ENCODE measurements at regions of chr17 and their contacts with region 1.

Region 1: DNA sequence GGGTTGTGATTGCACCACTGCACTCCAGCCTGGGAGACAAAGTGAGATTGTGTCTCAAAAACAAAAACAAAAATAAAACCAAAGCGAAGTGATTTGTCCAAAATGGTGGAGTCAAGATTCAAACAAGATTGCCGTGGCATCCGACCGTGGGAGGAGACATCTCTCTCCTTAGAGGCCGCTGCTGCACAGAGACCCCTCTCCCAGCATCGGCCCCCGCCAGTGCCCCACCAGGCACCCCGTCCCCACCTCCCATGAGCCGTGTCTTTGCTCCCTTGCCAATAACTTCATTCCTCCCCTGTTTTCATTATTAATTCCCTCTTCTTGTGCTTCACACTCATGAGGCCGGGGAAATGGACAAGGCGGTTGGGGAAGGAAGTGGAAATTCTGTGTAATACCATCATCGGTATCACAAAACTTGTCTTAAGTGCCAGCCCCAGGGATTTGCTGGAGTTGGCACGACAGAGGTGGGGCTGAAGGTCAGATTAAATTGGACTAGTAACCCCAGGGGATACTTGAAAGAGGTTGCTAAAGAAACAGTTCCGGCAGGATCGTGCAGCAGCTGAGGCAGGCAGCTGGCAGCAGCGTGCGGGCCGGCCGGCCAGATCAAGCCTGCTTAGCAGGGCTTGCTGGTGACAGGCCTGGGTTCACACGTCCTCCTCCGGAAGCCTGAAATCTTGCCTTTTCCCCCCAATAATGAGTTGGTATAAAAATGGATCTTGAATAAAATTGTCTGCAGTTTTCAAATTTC is 66.8 kb downstream of the RTN4RL1 start:
- DNase-seq: no peak
- ATAC-seq: no peak
- H3K4me3 ChIP-seq: no peak overlapping the region
- H3K4me3 Mint-ChIP-seq: no peak overlapping the region
- H3K27ac ChIP-seq: no peak overlapping the region
- H3K27ac Mint-ChIP-seq: no peak overlapping the region
- H3K4me1 ChIP-seq: no peaks in the 10 kb centered on the region
- H3K4me1 Mint-ChIP-seq: no peaks in the 10 kb centered on the region
- H3K27me3 ChIP-seq: peaks cover 0 to 8% of the 10 kb centered on the region in 2 experiments
- H3K27me3 Mint-ChIP-seq: no peaks in the 10 kb centered on the region

Region 2: GRCh38 chr17:596763-597644 is 1361.3 kb before region 1 on chr17:
- CTCF ChIA-PET with region 1: no interaction called
- POLR2A ChIA-PET with region 1: interaction called in 1 of 2 experiments, 14 read pairs
- DNase-seq: no peak
- ATAC-seq: no peak
- H3K4me3 ChIP-seq: no peak overlapping the region
- H3K4me3 Mint-ChIP-seq: no peak overlapping the region
- H3K27ac ChIP-seq: no peak overlapping the region
- H3K27ac Mint-ChIP-seq: no peak overlapping the region
- H3K4me1 ChIP-seq: no peaks in the 10 kb centered on the region
- H3K4me1 Mint-ChIP-seq: no peaks in the 10 kb centered on the region
- H3K27me3 ChIP-seq: no peaks in the 10 kb centered on the region
- H3K27me3 Mint-ChIP-seq: no peaks in the 10 kb centered on the region

Region 3: DNA sequence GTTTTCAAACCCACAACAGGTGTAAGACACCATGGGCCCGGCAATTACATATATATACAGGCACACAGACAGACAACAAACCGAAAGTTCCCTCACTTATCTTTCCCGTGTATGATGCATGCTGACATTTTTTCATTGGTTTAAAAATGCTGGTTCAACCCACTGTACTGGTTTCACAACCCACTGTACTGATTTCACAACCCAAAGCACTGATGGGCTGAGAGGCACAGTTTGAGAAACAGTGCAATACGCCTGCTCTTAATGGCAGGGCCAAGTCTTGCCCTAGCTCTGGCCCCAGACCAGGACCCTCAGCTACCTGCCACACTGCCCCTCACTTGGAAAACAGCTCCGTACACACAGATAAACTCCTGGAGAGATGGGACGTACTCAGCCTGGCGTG is 859.9 kb before region 1 on chr17:
- CTCF ChIA-PET with region 1: interaction called in 1 of 2 experiments, 11 read pairs
- POLR2A ChIA-PET with region 1: no interaction called
- DNase-seq: no peak
- ATAC-seq: peak in 1 of 4 experiments; percentile 25
- H3K4me3 ChIP-seq: no peak overlapping the region
- H3K4me3 Mint-ChIP-seq: peak overlapping the region in 1 of 3 donors; percentile 5
- H3K27ac ChIP-seq: no peak overlapping the region
- H3K27ac Mint-ChIP-seq: peak overlapping the region in 1 of 2 donors; percentile 9
- H3K4me1 ChIP-seq: peaks cover 4 to 27% of the 10 kb centered on the region in 2 experiments
- H3K4me1 Mint-ChIP-seq: peaks cover 12 to 45% (median 37%) of the 10 kb centered on the region in 3 donors
- H3K27me3 ChIP-seq: no peaks in the 10 kb centered on the region
- H3K27me3 Mint-ChIP-seq: no peaks in the 10 kb centered on the region

Region 4: GRCh38 chr17:2011411-2012371 is 53.4 kb after region 1 on chr17:
- CTCF ChIA-PET with region 1: no interaction called
- POLR2A ChIA-PET with region 1: no interaction called
- DNase-seq: no peak
- ATAC-seq: no peak
- H3K4me3 ChIP-seq: no peak overlapping the region
- H3K4me3 Mint-ChIP-seq: no peak overlapping the region
- H3K27ac ChIP-seq: no peak overlapping the region
- H3K27ac Mint-ChIP-seq: no peak overlapping the region
- H3K4me1 ChIP-seq: no peaks in the 10 kb centered on the region
- H3K4me1 Mint-ChIP-seq: no peaks in the 10 kb centered on the region
- H3K27me3 ChIP-seq: peaks cover 0 to 33% of the 10 kb centered on the region in 2 experiments
- H3K27me3 Mint-ChIP-seq: peaks cover 3 to 12% of the 10 kb centered on the region in 2 donors

Measured in T-cell (primary cell).